Common myeloid progenitor, CD34-positive (primary cell): ENCODE measurements at regions of chrX and their contacts with region 1.

Region 1: GRCh38 chrX:107776649-107777535 is 641 bp upstream of the NCBP2L start:
- DNase-seq: peak; percentile 84 to 93 (median 92)
- H3K4me3 ChIP-seq: peak overlapping the region in 6 of 7 experiments; percentile 23 to 75 (median 56)
- H3K27ac ChIP-seq: no peak overlapping the region
- H3K4me1 ChIP-seq: peaks cover 0 to 20% (median 11%) of the 10 kb centered on the region in 4 experiments
- H3K27me3 ChIP-seq: peaks cover 0 to 36% (median 6%) of the 10 kb centered on the region in 5 experiments

Region 2: DNA sequence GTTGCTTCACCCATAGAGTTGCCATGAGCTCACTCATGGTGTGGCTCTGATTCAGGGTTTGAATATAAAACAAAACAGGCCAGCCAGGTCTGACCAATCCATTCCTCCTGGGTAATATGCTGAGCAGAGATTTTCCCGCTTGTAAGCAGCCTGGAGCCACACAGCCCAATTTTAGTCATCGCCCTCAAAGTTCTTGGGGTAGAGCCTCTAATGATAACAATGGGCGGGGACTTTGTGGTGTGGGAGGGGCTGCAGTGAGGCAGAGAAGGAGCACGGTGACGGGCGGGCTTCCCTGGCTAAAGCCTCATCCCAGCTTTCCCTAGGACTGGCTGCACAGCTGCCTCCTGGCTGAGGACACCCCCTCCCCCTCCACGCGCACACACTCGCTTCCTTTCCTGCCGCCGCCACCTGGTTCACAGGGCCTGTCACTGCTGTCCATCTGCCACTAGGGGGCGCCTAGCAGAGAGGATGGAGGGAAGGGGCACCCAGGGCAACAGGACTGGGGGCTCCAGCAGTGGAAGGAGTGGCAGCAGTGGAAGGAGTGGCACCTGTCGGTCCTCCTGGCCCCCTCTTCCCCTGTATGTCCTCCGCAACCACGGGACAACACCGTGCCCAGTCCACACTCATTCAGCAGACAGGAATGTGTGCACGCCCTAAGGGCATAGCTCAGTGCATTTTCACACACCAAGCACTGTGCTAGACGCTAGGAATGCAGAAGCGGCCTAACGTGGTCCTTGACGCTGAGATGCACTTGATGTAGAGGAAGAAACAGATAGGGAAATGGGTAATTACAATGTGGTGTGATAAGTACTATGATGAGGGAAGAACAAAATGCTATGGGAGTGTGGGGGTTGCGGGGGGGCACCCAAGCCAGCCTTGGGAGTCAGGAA is 121.8 kb before region 1 on chrX:
- CTCF ChIA-PET with region 1: interaction called, 138 read pairs
- POLR2A ChIA-PET with region 1: no interaction called
- DNase-seq: peak in 2 of 3 donors; percentile 63 to 67
- H3K4me3 ChIP-seq: peak overlapping the region in 1 of 7 experiments; percentile 48
- H3K27ac ChIP-seq: no peak overlapping the region
- H3K4me1 ChIP-seq: peaks cover 0 to 6% (median 0%) of the 10 kb centered on the region in 4 experiments
- H3K27me3 ChIP-seq: peaks cover 0 to 7% (median 0%) of the 10 kb centered on the region in 5 experiments

Region 3: GRCh38 chrX:107766470-107767150 is 10.3 kb before region 1 on chrX:
- CTCF ChIA-PET with region 1: interaction called, 11 read pairs
- POLR2A ChIA-PET with region 1: no interaction called
- DNase-seq: no peak
- H3K4me3 ChIP-seq: no peak overlapping the region
- H3K27ac ChIP-seq: no peak overlapping the region
- H3K4me1 ChIP-seq: no peaks in the 10 kb centered on the region
- H3K27me3 ChIP-seq: peaks cover 0 to 22% (median 2%) of the 10 kb centered on the region in 5 experiments

Region 4: DNA sequence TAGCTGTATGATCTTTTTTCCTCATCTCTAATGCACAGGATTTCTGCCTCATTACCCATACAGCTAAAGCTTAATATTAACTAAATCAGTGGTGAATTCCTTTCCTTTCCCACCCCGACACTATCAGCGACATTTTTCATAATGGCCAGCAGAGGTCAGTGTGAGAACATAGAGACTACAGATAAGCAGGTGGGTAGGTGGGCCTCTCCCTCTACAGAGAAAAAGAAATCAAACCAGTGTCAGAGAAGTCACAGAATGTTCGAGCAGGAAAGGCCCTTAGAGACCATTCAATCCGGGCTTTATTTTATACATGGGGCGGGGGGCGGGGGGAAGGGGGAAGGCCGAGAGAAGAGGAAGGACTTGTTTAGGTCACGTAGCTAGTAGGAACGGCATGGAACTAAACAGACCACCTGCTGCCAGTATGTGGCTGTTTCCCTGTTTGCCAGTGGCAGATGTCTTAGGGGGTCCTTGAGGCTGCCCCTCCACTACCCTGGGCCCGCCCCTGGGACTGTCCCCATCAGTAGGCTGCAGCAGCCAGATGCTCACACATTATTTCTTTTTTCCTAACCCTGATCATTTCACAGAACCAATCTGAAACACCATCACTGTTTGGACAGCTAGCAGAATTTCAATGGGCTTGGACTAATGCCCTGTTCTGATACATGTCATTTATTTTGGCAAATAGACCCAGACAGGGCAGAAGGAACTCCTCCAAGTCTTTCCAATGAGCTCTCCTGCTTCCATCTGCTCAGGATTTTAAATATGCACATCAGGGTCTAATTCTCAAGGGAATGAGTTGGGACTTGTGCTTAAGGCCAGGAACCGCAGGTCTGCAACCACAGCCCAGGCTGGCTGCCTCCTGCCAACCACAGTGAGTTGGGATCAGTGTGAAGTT is 448.1 kb after region 1 on chrX:
- CTCF ChIA-PET with region 1: no interaction called
- POLR2A ChIA-PET with region 1: no interaction called
- DNase-seq: peak; percentile 22 to 64 (median 60)
- H3K4me3 ChIP-seq: no peak overlapping the region
- H3K27ac ChIP-seq: no peak overlapping the region
- H3K4me1 ChIP-seq: no peaks in the 10 kb centered on the region
- H3K27me3 ChIP-seq: peaks cover 0 to 34% (median 12%) of the 10 kb centered on the region in 5 experiments